Caco-2 (cell line): ENCODE measurements at regions of chr10 and their contacts with region 1.

Region 1: DNA sequence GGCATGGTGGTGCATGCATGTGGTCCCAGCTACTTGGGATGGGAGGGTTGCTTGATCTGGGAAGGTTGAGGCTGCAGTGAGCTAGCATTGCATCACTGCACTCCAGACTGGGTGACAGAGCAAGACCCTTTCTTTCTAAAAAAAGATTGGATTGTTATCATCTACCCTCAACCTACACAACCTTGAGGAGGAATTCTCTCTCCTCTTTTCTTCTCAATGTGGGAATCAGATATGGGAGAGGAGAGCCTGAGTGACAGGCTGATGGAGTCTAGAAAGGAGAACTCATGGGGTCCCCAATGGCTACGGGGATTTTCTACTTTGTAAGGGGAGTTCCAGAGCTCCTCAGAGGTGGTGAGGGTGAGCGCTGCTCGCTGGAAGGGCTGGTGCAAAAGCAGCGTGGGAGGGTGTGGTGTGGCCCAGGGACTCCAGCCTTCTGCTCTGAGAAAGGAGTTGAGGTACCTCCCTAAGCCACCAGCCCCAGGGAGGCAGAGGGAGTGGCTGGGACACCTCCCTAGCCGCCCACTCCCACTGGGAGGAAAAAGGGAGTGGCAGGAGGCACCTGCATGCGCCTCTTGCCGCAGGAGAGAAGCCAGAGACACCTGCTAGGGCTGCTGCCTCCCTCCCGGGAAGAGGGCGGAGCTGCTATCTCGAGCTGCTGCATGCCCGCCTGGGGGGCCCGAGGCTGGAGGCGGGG is 48.4 kb downstream of the GATA3 start:
- DNase-seq: peak; percentile 91 to 93
- H3K4me3 ChIP-seq: peak overlapping the region; percentile 21
- H3K4me3 Mint-ChIP-seq: peak overlapping the region; percentile 75
- H3K27ac Mint-ChIP-seq: peak overlapping the region; percentile 90
- H3K4me1 ChIP-seq: peaks cover 49% of the 10 kb centered on the region
- H3K4me1 Mint-ChIP-seq: peaks cover 38% of the 10 kb centered on the region
- H3K27me3 ChIP-seq: no peaks in the 10 kb centered on the region
- H3K27me3 Mint-ChIP-seq: no peaks in the 10 kb centered on the region
- CTCF ChIP-seq: no peak

Region 2: DNA sequence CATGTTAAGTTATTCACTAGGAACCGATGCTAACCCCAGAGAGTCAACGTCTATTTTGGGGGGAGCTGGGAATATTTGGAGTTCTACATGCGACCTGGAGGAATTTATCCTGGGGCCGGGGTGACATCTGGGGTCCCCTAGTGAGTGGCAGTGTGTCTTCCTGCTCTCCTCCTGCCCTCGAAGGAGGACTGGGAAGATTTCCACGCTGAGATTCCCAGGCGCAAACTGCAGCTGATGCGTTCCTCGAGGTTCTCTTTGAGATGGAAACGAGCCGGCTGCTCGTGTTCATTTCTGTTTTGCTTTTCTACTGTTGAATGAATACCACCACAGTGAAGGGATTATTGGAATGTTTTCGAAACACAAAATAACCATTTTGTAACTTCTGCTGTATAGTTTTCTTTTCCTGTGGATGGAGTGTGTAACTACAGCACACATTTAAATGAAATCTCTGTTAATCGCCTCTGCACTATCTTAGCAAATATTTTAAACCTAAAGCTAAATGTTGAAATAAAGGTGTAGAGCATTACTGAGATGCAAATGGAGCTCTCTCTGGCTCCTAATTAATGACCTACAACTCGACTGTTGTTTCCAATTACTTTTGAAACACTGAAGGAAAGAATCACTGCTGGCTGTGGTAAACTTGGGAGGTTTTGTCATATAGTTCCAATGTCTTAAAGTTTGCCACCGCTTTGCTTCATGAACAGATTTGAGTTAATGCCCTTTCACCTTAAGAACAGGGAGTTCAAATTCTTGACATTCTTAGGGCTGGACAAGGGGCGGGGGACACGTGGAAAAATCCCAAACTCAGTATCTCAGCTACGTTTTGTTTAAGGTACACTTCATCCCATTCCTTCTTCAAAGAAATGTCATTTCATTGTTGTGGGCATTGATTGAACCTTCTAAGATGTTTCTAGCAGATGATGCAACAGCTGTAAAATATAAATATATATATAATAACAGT is 27.3 kb before region 1 on chr10:
- CTCF ChIA-PET with region 1: no interaction called
- POLR2A ChIA-PET with region 1: no interaction called
- intact Hi-C with region 1: loop called (anchors 1 kb)
- DNase-seq: peak; percentile 85
- H3K4me3 ChIP-seq: no peak overlapping the region
- H3K4me3 Mint-ChIP-seq: peak overlapping the region; percentile 56
- H3K27ac Mint-ChIP-seq: peak overlapping the region; percentile 90
- H3K4me1 ChIP-seq: peaks cover 49% of the 10 kb centered on the region
- H3K4me1 Mint-ChIP-seq: peaks cover 58% of the 10 kb centered on the region
- H3K27me3 ChIP-seq: no peaks in the 10 kb centered on the region
- H3K27me3 Mint-ChIP-seq: no peaks in the 10 kb centered on the region
- CTCF ChIP-seq: no peak

Region 3: GRCh38 chr10:8084837-8085650 is 17.8 kb before region 1 on chr10:
- CTCF ChIA-PET with region 1: no interaction called
- POLR2A ChIA-PET with region 1: no interaction called
- intact Hi-C with region 1: loop called (anchors 1 kb)
- DNase-seq: peak in 1 of 2 experiments; percentile 63
- H3K4me3 ChIP-seq: no peak overlapping the region
- H3K4me3 Mint-ChIP-seq: no peak overlapping the region
- H3K27ac Mint-ChIP-seq: peak overlapping the region; percentile 63
- H3K4me1 ChIP-seq: peaks cover 19% of the 10 kb centered on the region
- H3K4me1 Mint-ChIP-seq: peaks cover 27% of the 10 kb centered on the region
- H3K27me3 ChIP-seq: no peaks in the 10 kb centered on the region
- H3K27me3 Mint-ChIP-seq: no peaks in the 10 kb centered on the region
- CTCF ChIP-seq: no peak